Caco-2 (cell line): ENCODE measurements at regions of chr5 and their contacts with region 1.

Region 1: GRCh38 chr5:43313035-43313853 is at the start of gene HMGCS1:
- DNase-seq: peak; percentile 99 to 100
- H3K4me3 ChIP-seq: peak within 1 kb of the TSS; percentile 56
- H3K4me3 Mint-ChIP-seq: peak within 1 kb of the TSS; percentile 99
- H3K27ac Mint-ChIP-seq: peak within 1 kb of the TSS; percentile 83
- H3K4me1 ChIP-seq: peaks cover 49% of the 10 kb centered on the region
- H3K4me1 Mint-ChIP-seq: peaks cover 34% of the 10 kb centered on the region
- H3K27me3 ChIP-seq: no peaks in the 10 kb centered on the region
- H3K27me3 Mint-ChIP-seq: no peaks in the 10 kb centered on the region
- CTCF ChIP-seq: no peak
- total RNA-seq, gene HMGCS1: 205 and 211 TPM in 2 replicates

Region 2: GRCh38 chr5:43066799-43067741 is 246.2 kb before region 1 on chr5:
- CTCF ChIA-PET with region 1: no interaction called
- POLR2A ChIA-PET with region 1: interaction called, 4 read pairs
- intact Hi-C with region 1: loop called (anchors 2 kb)
- DNase-seq: peak; percentile 89 to 90
- H3K4me3 ChIP-seq: peak overlapping the region; percentile 57
- H3K4me3 Mint-ChIP-seq: peak overlapping the region; percentile 88
- H3K27ac Mint-ChIP-seq: peak overlapping the region; percentile 86
- H3K4me1 ChIP-seq: peaks cover 20% of the 10 kb centered on the region
- H3K4me1 Mint-ChIP-seq: peaks cover 19% of the 10 kb centered on the region
- H3K27me3 ChIP-seq: no peaks in the 10 kb centered on the region
- H3K27me3 Mint-ChIP-seq: no peaks in the 10 kb centered on the region
- CTCF ChIP-seq: no peak

Region 3: GRCh38 chr5:43244823-43245565 is 68.2 kb before region 1 on chr5:
- CTCF ChIA-PET with region 1: no interaction called
- POLR2A ChIA-PET with region 1: no interaction called
- intact Hi-C with region 1: no loop called
- DNase-seq: no peak
- H3K4me3 ChIP-seq: no peak overlapping the region
- H3K4me3 Mint-ChIP-seq: no peak overlapping the region
- H3K27ac Mint-ChIP-seq: no peak overlapping the region
- H3K4me1 ChIP-seq: no peaks in the 10 kb centered on the region
- H3K4me1 Mint-ChIP-seq: no peaks in the 10 kb centered on the region
- H3K27me3 ChIP-seq: no peaks in the 10 kb centered on the region
- H3K27me3 Mint-ChIP-seq: peaks cover 9% of the 10 kb centered on the region
- CTCF ChIP-seq: no peak

Region 4: DNA sequence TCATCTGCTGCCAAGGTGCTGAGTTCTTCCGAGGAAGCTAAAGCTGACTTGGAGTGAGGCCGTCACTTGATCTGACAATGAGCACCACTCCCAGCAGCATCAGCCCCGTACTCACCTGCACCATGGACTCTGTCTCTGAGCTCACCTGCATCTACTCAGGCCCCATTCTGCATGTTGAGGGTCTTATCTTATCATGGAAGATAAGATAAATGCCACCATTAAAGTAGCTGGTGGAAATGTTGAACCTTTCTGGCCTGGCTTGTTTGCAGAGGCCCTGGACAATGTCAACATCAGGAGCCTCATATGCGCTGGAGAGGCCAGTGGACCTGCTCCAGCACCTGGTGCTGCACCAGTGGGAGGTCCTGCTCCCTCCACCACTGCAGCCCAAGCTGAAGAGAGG is 35.0 kb after region 1 on chr5:
- CTCF ChIA-PET with region 1: interaction called, 13 read pairs
- POLR2A ChIA-PET with region 1: interaction called, 24 read pairs
- intact Hi-C with region 1: loop called (anchors 1 kb)
- DNase-seq: peak; percentile 84 to 92
- H3K4me3 ChIP-seq: no peak overlapping the region
- H3K4me3 Mint-ChIP-seq: peak overlapping the region; percentile 49
- H3K27ac Mint-ChIP-seq: peak overlapping the region; percentile 65
- H3K4me1 ChIP-seq: peaks cover 45% of the 10 kb centered on the region
- H3K4me1 Mint-ChIP-seq: peaks cover 35% of the 10 kb centered on the region
- H3K27me3 ChIP-seq: no peaks in the 10 kb centered on the region
- H3K27me3 Mint-ChIP-seq: no peaks in the 10 kb centered on the region
- CTCF ChIP-seq: no peak

Region 5: DNA sequence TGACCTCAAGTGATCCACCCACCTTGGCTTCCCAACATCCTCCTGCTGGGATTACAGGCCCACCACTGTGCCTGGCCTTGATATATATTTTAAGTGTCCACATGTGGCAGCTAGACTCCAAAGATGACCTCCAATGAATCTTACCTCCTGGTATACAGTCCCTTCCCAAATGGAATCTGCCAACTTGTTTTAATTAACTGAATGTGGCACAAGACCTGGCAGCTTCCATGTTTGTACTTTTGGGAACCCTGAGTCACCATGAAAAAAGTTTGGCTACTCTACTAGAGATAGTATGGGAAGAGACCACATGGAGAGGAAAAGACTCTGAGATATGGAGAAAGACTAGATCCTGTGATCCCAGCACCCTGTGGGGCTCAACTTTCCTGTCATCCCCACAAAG is 56.4 kb after region 1 on chr5:
- CTCF ChIA-PET with region 1: no interaction called
- POLR2A ChIA-PET with region 1: interaction called, 3 read pairs
- intact Hi-C with region 1: loop called (anchors 1 kb)
- DNase-seq: no peak
- H3K4me3 ChIP-seq: no peak overlapping the region
- H3K4me3 Mint-ChIP-seq: no peak overlapping the region
- H3K27ac Mint-ChIP-seq: peak overlapping the region; percentile 73
- H3K4me1 ChIP-seq: peaks cover 35% of the 10 kb centered on the region
- H3K4me1 Mint-ChIP-seq: peaks cover 23% of the 10 kb centered on the region
- H3K27me3 ChIP-seq: no peaks in the 10 kb centered on the region
- H3K27me3 Mint-ChIP-seq: no peaks in the 10 kb centered on the region
- CTCF ChIP-seq: no peak